OCI-LY7 (cell line): ENCODE measurements at regions of chr4 and their contacts with region 1.

Region 1: GRCh38 chr4:88792268-88792781 is 94.7 kb upstream of the NAP1L5 start:
- DNase-seq: no peak
- H3K4me3 ChIP-seq: no peak overlapping the region
- H3K27ac ChIP-seq: no peak overlapping the region
- H3K4me1 ChIP-seq: no peaks in the 10 kb centered on the region
- CTCF ChIP-seq: no peak

Region 2: DNA sequence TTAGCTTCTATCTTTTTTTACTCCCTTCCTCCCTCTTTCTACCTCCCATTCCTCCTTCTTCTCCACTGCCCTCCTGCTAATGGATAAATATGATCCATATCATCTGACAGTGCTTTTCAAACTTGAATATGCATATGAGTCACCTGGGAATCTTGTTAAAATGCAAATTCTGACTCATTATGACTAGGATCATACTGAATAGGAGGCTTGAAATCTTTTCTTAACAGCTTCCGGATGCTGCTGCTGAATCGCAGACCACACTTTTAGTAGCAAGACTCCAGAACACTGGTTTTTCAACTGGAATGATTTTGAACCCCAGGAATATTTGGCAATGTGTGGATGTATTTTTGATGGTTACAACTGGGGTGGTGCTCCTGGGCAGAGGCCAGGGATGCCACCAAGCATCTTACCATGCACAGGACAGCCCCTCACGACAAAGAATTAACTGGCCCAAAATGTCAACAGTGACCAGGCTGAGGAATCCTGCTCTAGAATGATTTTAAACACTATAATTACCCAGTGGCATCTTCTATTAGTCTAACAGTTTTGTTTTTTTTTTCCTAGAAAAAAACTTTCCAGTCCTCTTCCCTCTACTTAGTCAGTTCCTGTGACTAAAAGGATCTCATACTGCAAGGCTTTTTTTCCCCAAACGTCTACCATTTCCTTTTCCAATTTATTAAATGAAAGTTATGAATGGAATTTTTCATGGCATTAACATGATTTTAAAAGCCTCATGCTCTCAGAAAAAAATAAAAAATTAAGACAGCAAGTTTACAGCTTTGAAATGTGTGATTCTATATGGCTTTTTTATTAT is 258.2 kb before region 1 on chr4:
- CTCF ChIA-PET with region 1: no interaction called
- POLR2A ChIA-PET with region 1: no interaction called
- intact Hi-C with region 1: loop called (anchors 10 kb)
- DNase-seq: no peak
- H3K4me3 ChIP-seq: no peak overlapping the region
- H3K27ac ChIP-seq: no peak overlapping the region
- H3K4me1 ChIP-seq: no peaks in the 10 kb centered on the region
- CTCF ChIP-seq: no peak